Adrenal gland (tissue), 19 donors: ENCODE measurements at regions of chr16 and their contacts with region 1.

Region 1: DNA sequence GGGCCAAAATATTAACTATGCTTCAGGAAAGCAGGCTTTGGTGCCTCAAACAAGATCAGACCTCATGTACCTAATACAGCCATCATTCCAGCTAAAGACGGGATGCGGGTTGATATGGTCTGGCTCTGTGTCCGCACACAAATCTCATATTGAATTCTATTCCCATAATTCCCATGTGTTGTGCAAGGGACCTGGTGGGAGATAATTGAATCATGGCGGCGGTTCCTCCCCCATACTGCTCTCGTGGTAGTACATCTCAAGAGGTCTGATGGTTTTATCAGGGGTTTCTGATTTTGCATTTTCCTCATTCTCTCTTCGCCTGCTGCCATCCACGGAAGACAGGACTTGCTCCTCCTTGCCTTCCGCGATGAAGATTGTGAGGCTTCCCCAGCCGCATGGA is 19.1 kb upstream of the CHST6 start:
- DNase-seq: no peak
- H3K4me3 ChIP-seq: no peak overlapping the region
- H3K27ac ChIP-seq: no peak overlapping the region
- H3K4me1 ChIP-seq: peaks cover 0 to 4% of the 10 kb centered on the region in 2 donors
- H3K27me3 ChIP-seq: no peaks in the 10 kb centered on the region
- CTCF ChIP-seq: no peak
- POLR2A ChIP-seq: no peak

Region 2: DNA sequence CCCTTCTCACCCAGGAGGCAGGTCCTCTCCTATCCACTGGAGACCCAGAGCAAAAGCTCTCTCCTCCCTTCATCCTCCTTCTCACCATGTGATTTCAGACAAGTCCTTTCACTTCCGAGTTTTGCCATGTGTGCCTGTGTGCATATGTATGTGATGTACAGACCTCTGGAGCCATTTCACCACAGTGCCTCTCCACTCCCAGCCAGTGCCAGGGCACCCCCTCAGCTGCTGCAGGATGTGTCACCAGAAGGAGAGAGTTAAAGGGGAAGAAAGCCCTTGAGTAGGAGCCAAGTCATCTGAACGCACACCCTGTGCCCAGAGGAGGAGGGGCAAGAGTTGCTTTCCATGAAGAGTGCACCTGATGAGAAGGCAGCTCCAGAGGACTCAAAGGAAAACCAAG is 36.2 kb before region 1 on chr16:
- intact Hi-C with region 1: loop called (anchors 5 kb)
- DNase-seq: peak in 3 of 7 donors; percentile 57 to 81 (median 67)
- H3K4me3 ChIP-seq: no peak overlapping the region
- H3K27ac ChIP-seq: no peak overlapping the region
- H3K4me1 ChIP-seq: peaks cover 0 to 10% of the 10 kb centered on the region in 2 donors
- H3K27me3 ChIP-seq: no peaks in the 10 kb centered on the region
- CTCF ChIP-seq: no peak
- POLR2A ChIP-seq: no peak

Region 3: DNA sequence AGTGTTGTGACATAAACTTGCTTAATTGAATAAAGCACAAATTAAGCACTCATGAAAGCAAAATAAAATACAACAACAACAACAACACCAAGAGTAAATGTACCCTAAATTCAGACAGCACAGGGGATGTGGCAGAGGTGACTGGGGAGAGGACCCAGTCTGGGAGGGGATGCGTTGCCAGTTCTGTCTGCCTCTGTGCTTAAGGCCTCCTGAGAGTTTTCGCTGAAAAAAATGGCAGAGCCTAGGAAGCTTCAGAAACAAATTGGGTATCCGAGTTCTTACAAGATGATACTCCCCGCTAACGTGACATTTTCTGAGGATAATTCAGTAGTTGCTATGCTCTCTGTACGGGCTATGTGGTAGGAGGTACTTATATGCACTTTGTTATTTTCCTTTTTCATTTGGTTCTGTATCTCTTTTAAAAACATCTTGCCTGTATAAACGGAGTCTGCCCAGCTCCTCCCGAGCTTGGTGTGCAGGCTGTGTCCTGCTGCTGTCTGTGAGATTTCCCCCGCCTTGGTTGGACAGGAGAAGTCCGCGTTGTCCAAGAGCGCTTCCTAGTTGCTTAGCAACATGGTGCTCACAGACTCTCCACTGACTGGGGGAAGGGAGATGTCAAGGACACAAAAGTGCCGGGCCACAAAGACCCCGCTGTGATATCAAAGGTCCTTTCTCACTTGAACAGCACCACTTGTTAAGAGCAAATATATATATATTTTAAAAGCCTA is 346.2 kb after region 1 on chr16:
- intact Hi-C with region 1: no loop called
- DNase-seq: peak in 1 of 7 donors; percentile 82
- H3K4me3 ChIP-seq: no peak overlapping the region
- H3K27ac ChIP-seq: no peak overlapping the region
- H3K4me1 ChIP-seq: no peaks in the 10 kb centered on the region
- H3K27me3 ChIP-seq: peaks cover 4% of the 10 kb centered on the region
- CTCF ChIP-seq: no peak
- POLR2A ChIP-seq: no peak